Caco-2 (cell line): ENCODE measurements at regions of chr4 and their contacts with region 1.

Region 1: GRCh38 chr4:120049732-120050494 is 16.7 kb downstream of the MAD2L1 start:
- DNase-seq: peak; percentile 75 to 81
- H3K4me3 ChIP-seq: no peak overlapping the region
- H3K4me3 Mint-ChIP-seq: no peak overlapping the region
- H3K27ac Mint-ChIP-seq: peak overlapping the region; percentile 76
- H3K4me1 ChIP-seq: no peaks in the 10 kb centered on the region
- H3K4me1 Mint-ChIP-seq: no peaks in the 10 kb centered on the region
- H3K27me3 ChIP-seq: no peaks in the 10 kb centered on the region
- H3K27me3 Mint-ChIP-seq: no peaks in the 10 kb centered on the region
- CTCF ChIP-seq: peak; percentile 78

Region 2: GRCh38 chr4:119490335-119490734 is 559.6 kb before region 1 on chr4:
- CTCF ChIA-PET with region 1: no interaction called
- POLR2A ChIA-PET with region 1: no interaction called
- intact Hi-C with region 1: loop called (anchors 10 kb)
- DNase-seq: peak in 1 of 2 experiments; percentile 25
- H3K4me3 ChIP-seq: no peak overlapping the region
- H3K4me3 Mint-ChIP-seq: no peak overlapping the region
- H3K27ac Mint-ChIP-seq: no peak overlapping the region
- H3K4me1 ChIP-seq: no peaks in the 10 kb centered on the region
- H3K4me1 Mint-ChIP-seq: no peaks in the 10 kb centered on the region
- H3K27me3 ChIP-seq: no peaks in the 10 kb centered on the region
- H3K27me3 Mint-ChIP-seq: no peaks in the 10 kb centered on the region
- CTCF ChIP-seq: peak in 1 of 2 experiments; percentile 47

Region 3: DNA sequence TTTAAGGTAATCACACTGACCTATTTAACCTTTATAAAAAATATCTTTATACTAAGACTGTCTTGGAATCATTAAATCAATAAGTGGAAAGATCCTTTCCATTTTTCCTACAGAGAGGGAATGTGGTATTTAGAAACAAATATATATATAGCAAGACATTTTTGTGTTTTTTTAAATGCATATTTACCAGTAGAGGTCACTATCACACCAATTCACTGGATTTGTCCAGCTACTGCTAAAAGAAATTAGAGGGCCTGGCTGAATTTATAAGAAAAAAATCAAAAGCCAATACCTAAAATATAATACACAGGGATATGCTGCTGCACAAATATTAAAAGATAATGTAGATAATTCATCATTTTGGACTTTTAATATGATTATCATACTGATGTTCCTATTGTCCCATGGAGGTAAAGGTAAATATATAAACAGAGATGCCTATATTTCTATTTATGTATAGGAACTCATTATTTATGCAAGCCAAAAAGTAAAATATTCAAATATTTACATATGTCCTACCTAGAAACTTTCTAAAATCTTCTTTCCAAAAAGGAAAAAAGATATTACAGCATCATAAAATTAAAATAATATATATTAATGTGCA is 490.8 kb before region 1 on chr4:
- CTCF ChIA-PET with region 1: no interaction called
- POLR2A ChIA-PET with region 1: no interaction called
- intact Hi-C with region 1: loop called (anchors 1 kb)
- DNase-seq: peak in 1 of 2 experiments; percentile 16
- H3K4me3 ChIP-seq: no peak overlapping the region
- H3K4me3 Mint-ChIP-seq: no peak overlapping the region
- H3K27ac Mint-ChIP-seq: no peak overlapping the region
- H3K4me1 ChIP-seq: no peaks in the 10 kb centered on the region
- H3K4me1 Mint-ChIP-seq: no peaks in the 10 kb centered on the region
- H3K27me3 ChIP-seq: no peaks in the 10 kb centered on the region
- H3K27me3 Mint-ChIP-seq: no peaks in the 10 kb centered on the region
- CTCF ChIP-seq: peak; percentile 29 to 38

Region 4: DNA sequence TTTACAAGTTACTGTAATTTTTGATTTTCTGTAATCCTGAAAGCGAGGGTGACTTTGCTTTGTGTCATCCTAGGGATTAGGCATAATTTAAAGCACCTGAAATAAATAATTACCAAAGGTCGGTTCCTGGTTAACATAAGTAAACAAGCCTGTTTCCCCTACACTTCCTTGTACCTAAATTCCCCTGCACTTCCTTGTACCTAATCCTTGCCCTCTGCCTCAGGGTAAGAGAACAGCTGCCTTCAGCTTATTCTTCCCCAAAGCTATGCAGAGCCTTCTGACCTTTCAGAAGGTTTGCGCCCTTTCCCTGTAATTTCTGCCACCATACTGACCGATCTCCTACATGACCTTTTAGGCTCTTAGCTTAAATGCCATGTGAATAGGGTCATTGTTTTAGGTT is 255.2 kb before region 1 on chr4:
- CTCF ChIA-PET with region 1: no interaction called
- POLR2A ChIA-PET with region 1: no interaction called
- intact Hi-C with region 1: loop called (anchors 10 kb)
- DNase-seq: no peak
- H3K4me3 ChIP-seq: no peak overlapping the region
- H3K4me3 Mint-ChIP-seq: no peak overlapping the region
- H3K27ac Mint-ChIP-seq: no peak overlapping the region
- H3K4me1 ChIP-seq: peaks cover 8% of the 10 kb centered on the region; the same call in 1 of the 2 replicates
- H3K4me1 Mint-ChIP-seq: no peaks in the 10 kb centered on the region
- H3K27me3 ChIP-seq: no peaks in the 10 kb centered on the region
- H3K27me3 Mint-ChIP-seq: no peaks in the 10 kb centered on the region
- CTCF ChIP-seq: no peak

Region 5: GRCh38 chr4:120156120-120156718 is 106.3 kb after region 1 on chr4:
- CTCF ChIA-PET with region 1: no interaction called
- POLR2A ChIA-PET with region 1: no interaction called
- intact Hi-C with region 1: no loop called
- DNase-seq: peak in 1 of 2 experiments; percentile 56
- H3K4me3 ChIP-seq: no peak overlapping the region
- H3K4me3 Mint-ChIP-seq: no peak overlapping the region
- H3K27ac Mint-ChIP-seq: no peak overlapping the region
- H3K4me1 ChIP-seq: no peaks in the 10 kb centered on the region
- H3K4me1 Mint-ChIP-seq: no peaks in the 10 kb centered on the region
- H3K27me3 ChIP-seq: no peaks in the 10 kb centered on the region
- H3K27me3 Mint-ChIP-seq: peaks cover 6% of the 10 kb centered on the region
- CTCF ChIP-seq: peak; percentile 28 to 57